ENCODE measurements at regions of chr17 and their contacts with region 1.

Region 1: DNA sequence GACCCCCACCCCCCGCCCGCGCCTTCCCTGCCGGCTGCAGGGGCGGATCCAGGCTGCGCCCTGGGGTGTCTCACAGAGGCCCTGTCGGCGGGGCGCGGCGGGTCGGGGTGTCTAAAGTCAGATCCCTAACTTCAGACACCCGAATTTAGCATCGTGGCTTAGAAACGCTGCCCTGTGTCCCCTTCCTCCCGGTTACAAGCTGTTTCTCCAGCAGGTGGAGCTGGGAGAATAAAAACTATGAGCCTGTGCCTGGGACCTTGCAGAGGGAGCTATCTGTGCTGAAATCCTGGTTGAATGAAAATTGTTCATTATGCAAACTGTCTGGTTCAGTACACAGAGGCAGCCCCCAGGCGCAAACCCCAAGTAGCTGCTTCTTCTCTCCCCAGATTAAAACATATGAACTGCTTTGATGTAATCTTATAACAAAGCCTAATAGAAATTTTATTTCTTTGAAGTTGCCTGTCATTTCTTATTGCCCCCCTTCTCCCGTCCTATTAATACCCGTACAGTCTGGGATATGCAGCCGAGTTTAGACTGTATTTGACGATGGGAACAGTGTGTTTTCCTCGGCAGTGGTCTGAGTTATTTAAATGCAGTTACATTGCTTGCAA is 79.0 kb downstream of the RPA1 start:
- DNase-seq: peak; percentile 81 to 85
- ATAC-seq: peak; percentile 88 to 96
- H3K4me3 ChIP-seq: no peak overlapping the region
- H3K27ac ChIP-seq: peak overlapping the region in 1 of 2 experiments; percentile 33; a peak in 1 of 6 replicates
- H3K4me1 ChIP-seq: peaks cover 9% of the 10 kb centered on the region; the same call in 1 of the 3 replicates
- CTCF ChIP-seq: peak; percentile 95
- EP300 ChIP-seq: no peak
- POLR2A ChIP-seq: no peak
- RAD21 ChIP-seq: peak; percentile 97

Region 2: DNA sequence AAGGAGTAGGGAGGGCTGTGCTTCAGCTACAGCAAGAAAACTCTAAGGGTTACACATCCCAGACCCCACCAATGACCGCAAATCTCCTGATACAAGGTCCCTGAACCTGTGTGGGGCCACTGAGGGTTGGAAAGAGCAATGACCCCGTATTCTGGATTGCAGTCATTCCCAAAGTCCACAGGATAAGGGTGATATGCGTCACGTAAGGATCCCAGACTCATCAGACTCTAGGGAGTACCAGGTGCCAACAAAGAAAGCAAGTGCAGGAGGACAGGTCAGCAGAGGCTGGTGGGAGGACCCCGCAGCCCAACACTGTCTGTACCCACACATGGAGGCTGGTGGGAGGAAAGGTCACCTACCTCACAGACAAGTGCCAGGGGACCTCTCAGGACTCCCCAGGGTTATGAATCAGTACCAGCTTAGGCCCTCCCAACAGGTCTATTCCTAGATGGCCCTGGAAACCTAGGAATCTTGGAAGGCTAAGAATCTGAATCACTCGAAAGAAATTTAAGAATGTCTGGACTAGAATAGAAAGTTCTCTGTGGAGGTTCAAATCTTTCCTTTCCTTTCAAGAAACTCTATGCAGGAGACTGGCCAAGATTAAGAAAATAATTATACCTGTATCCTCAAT is 362.4 kb before region 1 on chr17:
- CTCF ChIA-PET with region 1: no interaction called
- POLR2A ChIA-PET with region 1: no interaction called
- DNase-seq: no peak
- ATAC-seq: no peak
- H3K4me3 ChIP-seq: no peak overlapping the region
- H3K27ac ChIP-seq: no peak overlapping the region
- H3K4me1 ChIP-seq: no peaks in the 10 kb centered on the region
- CTCF ChIP-seq: no peak
- EP300 ChIP-seq: no peak
- POLR2A ChIP-seq: no peak
- RAD21 ChIP-seq: no peak

Region 3: GRCh38 chr17:1882836-1883235 is 26.0 kb before region 1 on chr17:
- CTCF ChIA-PET with region 1: interaction called, 10 read pairs
- POLR2A ChIA-PET with region 1: no interaction called
- DNase-seq: peak; percentile 59 to 66
- ATAC-seq: peak; percentile 41 to 80; a peak in 3 of 6 replicates
- H3K4me3 ChIP-seq: no peak overlapping the region
- H3K27ac ChIP-seq: no peak overlapping the region
- H3K4me1 ChIP-seq: no peaks in the 10 kb centered on the region
- CTCF ChIP-seq: peak; percentile 58
- EP300 ChIP-seq: no peak
- POLR2A ChIP-seq: no peak
- RAD21 ChIP-seq: peak; percentile 59 to 65

Region 4: GRCh38 chr17:1931759-1932579 is 23.2 kb after region 1 on chr17:
- CTCF ChIA-PET with region 1: interaction called, 13 read pairs
- POLR2A ChIA-PET with region 1: no interaction called
- DNase-seq: no peak
- ATAC-seq: no peak
- H3K4me3 ChIP-seq: no peak overlapping the region
- H3K27ac ChIP-seq: no peak overlapping the region
- H3K4me1 ChIP-seq: no peaks in the 10 kb centered on the region
- CTCF ChIP-seq: no peak
- EP300 ChIP-seq: no peak
- POLR2A ChIP-seq: no peak
- RAD21 ChIP-seq: no peak

Region 5: GRCh38 chr17:1999557-2000251 is 90.9 kb after region 1 on chr17:
- CTCF ChIA-PET with region 1: interaction called, 19 read pairs
- POLR2A ChIA-PET with region 1: no interaction called
- DNase-seq: peak in 1 of 2 experiments; percentile 50
- ATAC-seq: peak; percentile 10 to 52; a peak in 3 of 6 replicates
- H3K4me3 ChIP-seq: no peak overlapping the region
- H3K27ac ChIP-seq: peak overlapping the region; percentile 66 to 96
- H3K4me1 ChIP-seq: peaks cover 48% of the 10 kb centered on the region
- CTCF ChIP-seq: no peak
- EP300 ChIP-seq: no peak
- POLR2A ChIP-seq: no peak
- RAD21 ChIP-seq: no peak

Region 6: DNA sequence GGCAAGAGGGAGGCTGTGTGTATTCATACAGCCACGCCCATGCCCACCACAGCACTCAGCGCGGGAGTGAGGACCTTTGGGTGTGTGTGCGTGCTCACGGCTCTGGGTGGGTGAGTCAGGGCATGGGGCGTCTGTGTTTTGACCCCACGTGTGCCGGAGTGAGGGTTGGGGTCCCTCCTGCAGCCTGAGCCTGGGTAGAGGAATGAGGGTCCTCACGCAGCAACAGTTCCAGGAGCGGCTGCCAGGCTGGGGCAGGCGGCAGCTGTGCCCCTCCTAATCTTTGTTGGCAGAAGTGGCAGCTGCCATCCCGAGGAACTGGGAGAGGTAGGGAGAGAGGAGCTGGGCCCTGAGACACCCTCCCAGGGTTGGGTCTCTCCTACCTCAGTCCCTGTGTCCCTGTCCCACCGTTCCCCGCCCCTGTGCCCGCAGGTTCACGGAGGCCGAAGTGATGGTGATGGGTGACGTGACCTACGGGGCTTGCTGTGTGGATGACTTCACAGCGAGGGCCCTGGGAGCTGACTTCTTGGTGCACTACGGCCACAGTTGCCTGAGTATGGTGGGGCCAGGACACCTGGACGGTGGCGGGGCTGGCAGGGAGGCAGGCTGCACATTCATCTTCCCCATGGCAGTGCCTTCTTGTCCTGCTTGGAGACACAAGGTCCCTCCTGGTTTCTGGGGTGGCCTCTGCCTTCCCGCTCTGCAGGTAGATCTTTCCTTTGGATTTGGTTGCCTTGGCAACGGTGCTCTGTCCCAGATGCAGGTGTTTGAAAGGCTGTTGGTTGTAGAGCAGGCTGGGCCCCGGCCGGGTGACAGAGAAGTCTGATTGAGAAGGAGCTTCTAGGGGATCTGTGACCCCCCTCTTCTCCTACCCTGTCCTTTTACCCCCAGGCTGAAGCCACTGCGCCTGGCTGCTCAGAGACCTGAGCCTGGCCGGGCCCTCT is 127.0 kb after region 1 on chr17:
- CTCF ChIA-PET with region 1: interaction called, 420 read pairs
- POLR2A ChIA-PET with region 1: interaction called, 3 read pairs
- DNase-seq: no peak
- ATAC-seq: no peak
- H3K4me3 ChIP-seq: no peak overlapping the region
- H3K27ac ChIP-seq: peak overlapping the region in 1 of 2 experiments; percentile 65; a peak in 3 of 6 replicates
- H3K4me1 ChIP-seq: peaks cover 19% of the 10 kb centered on the region
- CTCF ChIP-seq: no peak
- EP300 ChIP-seq: no peak
- POLR2A ChIP-seq: no peak
- RAD21 ChIP-seq: no peak

Region 7: GRCh38 chr17:2049333-2050299 is 140.8 kb after region 1 on chr17:
- CTCF ChIA-PET with region 1: interaction called, 17 read pairs
- POLR2A ChIA-PET with region 1: no interaction called
- DNase-seq: peak; percentile 74 to 81
- ATAC-seq: peak; percentile 17 to 30
- H3K4me3 ChIP-seq: peak overlapping the region; percentile 70
- H3K27ac ChIP-seq: peak overlapping the region; percentile 82 to 89
- H3K4me1 ChIP-seq: peaks cover 7% of the 10 kb centered on the region; the same call in 2 of the 3 replicates
- CTCF ChIP-seq: no peak
- EP300 ChIP-seq: no peak
- POLR2A ChIP-seq: peak; percentile 32; the same call in 1 of the 2 replicates
- RAD21 ChIP-seq: no peak